ENCODE measurements at regions of chr10 and their contacts with region 1.

Region 1: DNA sequence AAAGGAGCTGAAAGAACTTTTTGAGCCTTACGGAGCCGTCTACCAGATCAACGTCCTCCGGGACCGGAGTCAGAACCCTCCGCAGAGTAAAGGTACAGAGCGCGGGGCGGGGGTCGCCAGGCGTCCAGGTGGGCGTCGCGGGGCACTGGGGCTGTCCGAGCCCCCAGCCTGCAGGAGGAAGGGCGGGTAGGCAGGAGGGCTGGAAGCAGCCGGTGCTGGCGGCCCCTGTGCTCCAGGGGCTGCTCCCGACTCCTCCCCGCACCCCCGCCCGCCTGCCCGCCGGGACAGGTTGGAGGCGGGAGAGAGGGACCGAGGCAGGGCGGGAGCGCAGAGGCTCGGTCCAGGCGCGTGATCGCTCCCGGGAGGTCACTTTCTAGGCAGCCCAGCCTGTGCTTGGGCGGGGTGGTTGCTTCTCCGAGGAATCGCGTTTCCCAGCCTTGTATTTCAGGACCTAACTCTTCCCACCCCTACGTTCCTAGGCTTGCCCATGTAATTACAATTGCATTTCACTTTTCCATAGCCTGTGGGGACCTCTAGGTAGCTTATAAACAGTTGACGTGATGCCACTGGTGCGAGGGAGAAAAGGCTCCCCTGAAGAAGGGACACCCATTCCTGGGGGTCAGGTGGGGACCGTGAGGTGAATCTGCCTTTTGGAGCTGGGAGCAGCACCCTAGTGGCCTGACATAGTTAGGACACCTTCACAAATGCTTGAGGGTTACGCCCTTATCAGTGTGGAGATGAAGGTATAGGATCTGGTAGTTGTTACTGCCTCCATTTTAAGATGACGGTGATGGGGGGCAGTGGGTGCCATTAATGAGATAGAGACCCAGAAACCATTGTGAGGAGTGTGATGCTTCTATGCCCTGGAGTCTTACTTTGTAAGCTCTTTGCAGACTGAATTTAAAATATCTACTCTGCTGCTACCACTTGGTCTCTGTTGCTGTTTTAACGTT is 148.2 kb downstream of the CELF2 start:
- DNase-seq: peak; percentile 77 to 88 (median 81)
- ATAC-seq: peak; percentile 89
- H3K4me3 ChIP-seq: peak overlapping the region; percentile 55
- H3K27ac ChIP-seq: peak overlapping the region; percentile 57
- H3K4me1 ChIP-seq: peaks cover 12 to 36% of the 10 kb centered on the region in 2 experiments
- H3K27me3 ChIP-seq: no peaks in the 10 kb centered on the region
- CTCF ChIP-seq: peak; percentile 48 to 83 (median 67)
- EP300 ChIP-seq: no peak
- POLR2A ChIP-seq: no peak
- RAD21 ChIP-seq: peak; percentile 51 to 57

Region 2: GRCh38 chr10:11141571-11142091 is 24.2 kb before region 1 on chr10:
- CTCF ChIA-PET with region 1: no interaction called
- POLR2A ChIA-PET with region 1: interaction called, 3 read pairs
- in situ Hi-C with region 1: no loop called
- intact Hi-C with region 1: loop called (anchors 1 kb)
- DNase-seq: peak; percentile 15 to 86 (median 44)
- ATAC-seq: peak; percentile 87
- H3K4me3 ChIP-seq: no peak overlapping the region
- H3K27ac ChIP-seq: peak overlapping the region; percentile 30; the same call in 2 of the 3 replicates
- H3K4me1 ChIP-seq: peaks cover 14 to 31% of the 10 kb centered on the region in 2 experiments
- H3K27me3 ChIP-seq: no peaks in the 10 kb centered on the region
- CTCF ChIP-seq: no peak
- EP300 ChIP-seq: peak; percentile 97
- POLR2A ChIP-seq: no peak
- RAD21 ChIP-seq: peak in 1 of 2 experiments; percentile 25; a peak in 1 of 4 replicates

Region 3: DNA sequence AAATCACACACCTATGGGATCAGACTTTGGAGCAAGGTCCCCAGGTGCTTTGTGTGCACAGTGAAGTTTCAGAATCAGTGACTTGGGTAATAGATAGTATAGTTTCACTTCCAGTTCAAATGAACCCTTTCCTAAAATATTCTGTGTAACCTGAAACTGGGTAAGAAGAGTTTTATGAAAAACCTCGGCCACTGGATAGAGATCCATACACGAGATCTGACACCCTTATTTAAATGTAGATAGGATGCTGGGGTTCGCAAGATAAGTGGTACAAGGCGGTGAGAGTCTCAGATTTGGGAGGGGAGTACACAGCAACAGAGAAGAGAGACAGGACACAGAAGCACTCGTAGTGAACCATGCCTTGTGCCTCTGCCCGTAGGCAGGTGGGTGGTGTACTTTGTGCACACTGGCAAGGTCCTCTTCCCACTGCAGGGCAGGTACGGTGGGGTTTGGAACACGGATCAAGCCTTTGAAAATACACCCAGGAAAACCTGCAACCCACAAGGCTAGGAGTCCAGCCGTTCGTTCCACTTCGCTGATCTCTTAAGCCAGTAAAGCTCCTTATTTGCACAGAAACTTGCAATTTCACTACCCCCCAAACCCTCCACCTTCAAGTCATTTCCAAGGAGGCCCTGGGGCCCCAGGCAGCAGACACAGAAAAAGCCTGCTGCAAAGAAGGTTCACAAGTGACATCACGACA is 282.8 kb after region 1 on chr10:
- CTCF ChIA-PET with region 1: no interaction called
- POLR2A ChIA-PET with region 1: no interaction called
- in situ Hi-C with region 1: no loop called
- intact Hi-C with region 1: no loop called
- DNase-seq: no peak
- ATAC-seq: no peak; the same call in 2 of the 3 replicates
- H3K4me3 ChIP-seq: no peak overlapping the region
- H3K27ac ChIP-seq: no peak overlapping the region
- H3K4me1 ChIP-seq: peaks cover 30 to 32% of the 10 kb centered on the region in 2 experiments
- H3K27me3 ChIP-seq: no peaks in the 10 kb centered on the region
- CTCF ChIP-seq: no peak
- EP300 ChIP-seq: no peak
- POLR2A ChIP-seq: no peak
- RAD21 ChIP-seq: no peak

Region 4: DNA sequence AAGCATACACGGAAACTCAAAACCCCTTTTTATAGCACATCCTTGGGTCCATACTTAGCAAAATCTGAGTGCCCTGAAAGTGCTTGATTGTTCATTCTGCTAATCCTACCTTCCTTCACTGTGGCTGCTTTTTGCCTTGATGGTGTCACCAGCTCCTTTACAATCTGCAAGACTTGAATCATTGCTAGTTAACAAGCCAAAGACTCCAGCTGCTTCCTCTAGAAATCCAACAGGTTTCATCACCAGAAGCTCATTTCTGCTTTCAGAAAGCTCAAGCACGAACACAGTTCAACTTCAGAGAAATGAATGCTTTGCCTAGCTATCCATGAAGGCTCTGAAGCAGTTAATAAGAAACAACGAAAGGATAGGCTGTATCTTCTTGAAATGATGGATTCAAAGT is 407.6 kb after region 1 on chr10:
- CTCF ChIA-PET with region 1: no interaction called
- POLR2A ChIA-PET with region 1: no interaction called
- in situ Hi-C with region 1: no loop called
- intact Hi-C with region 1: no loop called
- DNase-seq: no peak
- ATAC-seq: peak; percentile 45
- H3K4me3 ChIP-seq: no peak overlapping the region
- H3K27ac ChIP-seq: no peak overlapping the region
- H3K4me1 ChIP-seq: peaks cover 0 to 6% of the 10 kb centered on the region in 2 experiments; a peak in 2 of 5 replicates
- H3K27me3 ChIP-seq: no peaks in the 10 kb centered on the region
- CTCF ChIP-seq: no peak
- EP300 ChIP-seq: no peak
- POLR2A ChIP-seq: no peak
- RAD21 ChIP-seq: no peak